B cell (primary cell): ENCODE measurements at regions of chr2 and their contacts with region 1.

Region 1: GRCh38 chr2:60581433-60582282 is 28.2 kb upstream of the BCL11A start:
- DNase-seq: peak; percentile 89
- ATAC-seq: peak; percentile 100
- H3K4me3 ChIP-seq: peak overlapping the region in 4 of 5 experiments; percentile 38 to 61 (median 51)
- H3K4me3 Mint-ChIP-seq: peak overlapping the region; percentile 72
- H3K27ac ChIP-seq: no peak overlapping the region
- H3K27ac Mint-ChIP-seq: no peak overlapping the region
- H3K4me1 ChIP-seq: peaks cover 7 to 10% of the 10 kb centered on the region in 2 donors
- H3K4me1 Mint-ChIP-seq: peaks cover 7% of the 10 kb centered on the region
- H3K27me3 ChIP-seq: peaks cover 0 to 14% (median 0%) of the 10 kb centered on the region in 4 experiments
- H3K27me3 Mint-ChIP-seq: peaks cover 24% of the 10 kb centered on the region
- CTCF ChIP-seq: peak; percentile 98

Region 2: GRCh38 chr2:58762176-58762781 is 1819.4 kb before region 1 on chr2:
- CTCF ChIA-PET with region 1: interaction called, 44 read pairs
- POLR2A ChIA-PET with region 1: no interaction called
- intact Hi-C with region 1: loop called (anchors 1 kb)
- DNase-seq: peak; percentile 65
- ATAC-seq: peak; percentile 74
- H3K4me3 ChIP-seq: no peak overlapping the region
- H3K4me3 Mint-ChIP-seq: no peak overlapping the region
- H3K27ac ChIP-seq: no peak overlapping the region
- H3K27ac Mint-ChIP-seq: no peak overlapping the region
- H3K4me1 ChIP-seq: peaks cover 7 to 8% of the 10 kb centered on the region in 2 donors
- H3K4me1 Mint-ChIP-seq: peaks cover 8% of the 10 kb centered on the region
- H3K27me3 ChIP-seq: no peaks in the 10 kb centered on the region
- H3K27me3 Mint-ChIP-seq: peaks cover 4% of the 10 kb centered on the region
- CTCF ChIP-seq: peak; percentile 82

Region 3: DNA sequence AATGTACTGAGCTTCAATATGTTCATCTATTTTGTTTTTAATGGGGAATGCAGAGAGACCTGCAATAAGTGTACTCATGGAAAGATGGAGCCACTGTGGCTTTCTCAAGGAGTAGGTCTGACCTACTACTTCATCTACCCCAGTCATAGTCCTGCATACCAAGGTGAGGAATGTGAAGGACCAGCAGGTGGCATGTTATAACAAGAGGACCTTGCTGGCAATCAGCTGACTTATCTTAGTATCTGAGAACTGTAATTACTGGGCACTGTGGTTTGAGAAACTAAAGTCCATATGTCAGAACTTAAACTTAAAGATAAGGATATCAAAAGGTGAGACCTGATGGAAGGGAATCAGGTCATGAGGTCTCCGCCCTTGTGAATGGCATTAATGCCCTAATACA is 1132.4 kb before region 1 on chr2:
- CTCF ChIA-PET with region 1: interaction called, 19 read pairs
- POLR2A ChIA-PET with region 1: no interaction called
- intact Hi-C with region 1: loop called (anchors 1 kb)
- DNase-seq: peak; percentile 65
- ATAC-seq: peak; percentile 78
- H3K4me3 ChIP-seq: no peak overlapping the region
- H3K4me3 Mint-ChIP-seq: no peak overlapping the region
- H3K27ac ChIP-seq: no peak overlapping the region
- H3K27ac Mint-ChIP-seq: no peak overlapping the region
- H3K4me1 ChIP-seq: no peaks in the 10 kb centered on the region
- H3K4me1 Mint-ChIP-seq: no peaks in the 10 kb centered on the region
- H3K27me3 ChIP-seq: no peaks in the 10 kb centered on the region
- H3K27me3 Mint-ChIP-seq: peaks cover 4% of the 10 kb centered on the region
- CTCF ChIP-seq: no peak

Region 4: DNA sequence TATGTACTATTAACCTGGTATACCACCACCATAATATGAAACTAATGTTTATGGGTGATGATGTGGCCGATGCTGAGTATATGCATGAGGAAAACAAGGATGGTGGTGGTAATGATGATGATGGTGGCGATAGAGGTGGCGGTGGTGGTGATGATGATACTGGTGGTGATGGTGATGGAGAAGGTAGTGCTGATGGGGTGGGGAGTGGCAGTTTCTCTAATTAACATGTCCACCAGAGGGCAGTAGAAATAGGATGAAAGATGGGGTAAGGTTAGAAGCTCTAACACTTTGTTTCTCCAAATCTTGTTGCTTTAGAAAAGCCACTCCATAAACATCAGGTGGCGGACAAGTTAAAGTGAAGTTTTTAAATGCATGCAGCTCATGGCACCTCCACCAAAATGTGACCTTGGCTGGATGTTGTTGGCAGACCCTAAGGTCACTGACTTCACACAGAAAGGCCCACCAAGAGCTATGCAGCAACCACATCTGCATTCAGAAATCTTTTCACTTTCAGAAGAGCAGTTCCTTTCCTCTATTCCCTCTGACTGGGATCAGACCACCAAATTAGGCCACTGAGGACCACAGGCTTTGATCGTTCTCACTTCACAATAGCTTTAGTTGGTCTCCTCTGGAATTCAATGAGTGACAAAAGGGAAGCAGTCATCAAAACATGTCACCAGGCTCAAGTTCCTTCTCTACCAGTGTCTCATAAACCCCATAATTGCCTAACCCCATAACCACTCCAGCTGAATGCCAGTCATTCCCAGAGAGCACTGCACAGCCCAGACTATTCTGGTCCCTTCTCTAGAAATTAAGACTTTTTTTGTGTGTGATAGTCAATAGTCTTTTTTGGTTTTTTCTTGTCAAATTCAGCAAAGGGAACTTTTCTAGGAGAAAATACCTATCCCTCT is 20.7 kb before region 1 on chr2:
- CTCF ChIA-PET with region 1: interaction called, 63 read pairs
- POLR2A ChIA-PET with region 1: no interaction called
- intact Hi-C with region 1: loop called (anchors 2 kb)
- DNase-seq: peak; percentile 75
- ATAC-seq: peak; percentile 53
- H3K4me3 ChIP-seq: no peak overlapping the region
- H3K4me3 Mint-ChIP-seq: no peak overlapping the region
- H3K27ac ChIP-seq: no peak overlapping the region
- H3K27ac Mint-ChIP-seq: peak overlapping the region; percentile 70
- H3K4me1 ChIP-seq: peaks cover 18% of the 10 kb centered on the region in 2 donors
- H3K4me1 Mint-ChIP-seq: peaks cover 37% of the 10 kb centered on the region
- H3K27me3 ChIP-seq: no peaks in the 10 kb centered on the region
- H3K27me3 Mint-ChIP-seq: no peaks in the 10 kb centered on the region
- CTCF ChIP-seq: peak; percentile 63

Region 5: GRCh38 chr2:60597346-60597745 is 15.7 kb after region 1 on chr2:
- CTCF ChIA-PET with region 1: interaction called, 11 read pairs
- POLR2A ChIA-PET with region 1: no interaction called
- intact Hi-C with region 1: no loop called
- DNase-seq: no peak
- ATAC-seq: no peak
- H3K4me3 ChIP-seq: no peak overlapping the region
- H3K4me3 Mint-ChIP-seq: no peak overlapping the region
- H3K27ac ChIP-seq: no peak overlapping the region
- H3K27ac Mint-ChIP-seq: no peak overlapping the region
- H3K4me1 ChIP-seq: no peaks in the 10 kb centered on the region
- H3K4me1 Mint-ChIP-seq: peaks cover 5% of the 10 kb centered on the region
- H3K27me3 ChIP-seq: no peaks in the 10 kb centered on the region
- H3K27me3 Mint-ChIP-seq: peaks cover 21% of the 10 kb centered on the region
- CTCF ChIP-seq: no peak